Activated CD4-positive, alpha-beta memory T cell treated with anti-CD3 and anti-CD28 coated beads, Interleukin-2, amount 10 ng/mL, durations not matched to agents 7 days and 5 days (primary cell): ENCODE measurements at regions of chr5 and their contacts with region 1.

Region 1: DNA sequence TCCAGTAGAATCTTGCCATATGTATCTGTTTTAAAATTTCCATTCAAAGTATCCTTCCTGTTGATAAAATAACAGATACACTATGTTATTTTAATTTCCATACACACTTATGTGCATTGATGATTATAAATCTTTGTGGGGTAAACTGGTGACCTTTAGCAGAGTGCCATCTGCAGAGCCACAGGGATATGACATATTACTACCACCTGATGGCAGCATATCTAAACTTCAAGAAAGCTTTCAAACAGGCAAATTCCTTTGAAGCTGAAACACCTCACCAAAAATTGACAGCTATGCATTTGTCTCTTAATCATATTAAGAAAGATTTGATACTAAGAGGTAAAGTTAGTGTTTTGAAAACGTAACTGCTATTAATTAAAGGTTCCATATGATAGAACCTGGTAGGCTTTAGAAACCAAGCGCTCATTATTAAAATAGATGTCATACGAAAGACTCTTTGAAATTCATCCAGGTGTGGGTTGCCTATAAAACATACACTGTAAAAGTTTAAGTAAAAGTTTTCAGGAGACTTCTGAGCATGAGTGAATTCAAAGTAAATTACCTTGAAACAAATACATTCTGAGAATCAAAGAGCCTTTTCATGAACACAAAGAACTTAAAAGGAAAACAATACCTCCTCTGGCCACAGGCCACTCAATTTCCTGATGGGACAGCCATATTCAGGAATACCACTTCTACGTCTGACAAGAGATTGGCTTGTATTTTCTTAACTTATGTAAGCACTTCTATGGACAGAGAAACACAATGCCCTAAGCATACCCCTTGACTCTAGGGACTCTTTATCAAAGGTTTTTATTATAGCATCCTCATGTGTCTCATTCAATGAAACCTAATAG is 93.3 kb downstream of the KIAA0825 start:
- DNase-seq: peak; percentile 23
- H3K4me3 Mint-ChIP-seq: no peak overlapping the region
- H3K27ac Mint-ChIP-seq: no peak overlapping the region
- H3K4me1 Mint-ChIP-seq: peaks cover 3% of the 10 kb centered on the region
- H3K27me3 Mint-ChIP-seq: no peaks in the 10 kb centered on the region

Region 2: DNA sequence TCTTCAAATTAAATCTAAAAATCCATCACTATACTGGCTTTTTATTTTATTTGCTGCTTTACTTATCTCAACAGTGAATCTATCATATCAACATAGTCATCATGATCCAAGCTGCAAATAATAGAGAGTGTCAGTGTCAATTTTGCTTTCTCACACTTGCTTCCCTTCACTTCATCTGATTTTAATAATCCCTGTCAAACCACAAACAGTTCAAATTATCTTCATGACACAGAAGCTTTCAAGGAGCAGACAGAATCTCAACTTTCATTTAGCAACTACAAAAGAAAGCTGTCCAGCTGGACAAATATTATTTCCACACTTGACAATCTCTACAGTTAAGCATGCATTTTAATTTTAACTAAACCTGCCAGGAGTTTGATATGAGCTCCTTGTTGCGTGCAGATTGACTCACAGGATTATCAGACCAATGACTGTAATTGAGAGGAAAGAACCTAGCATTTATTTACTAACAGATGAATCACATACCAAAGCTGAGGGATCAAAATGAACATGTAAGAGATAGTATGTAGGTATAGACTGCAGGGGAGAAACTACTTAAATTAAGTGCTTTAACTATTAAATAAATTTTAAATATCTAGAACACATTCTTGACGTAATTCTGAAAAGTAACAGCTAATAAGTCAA is 37.4 kb after region 1 on chr5:
- CTCF ChIA-PET with region 1: no interaction called
- POLR2A ChIA-PET with region 1: no interaction called
- DNase-seq: no peak
- H3K4me3 Mint-ChIP-seq: no peak overlapping the region
- H3K27ac Mint-ChIP-seq: no peak overlapping the region
- H3K4me1 Mint-ChIP-seq: no peaks in the 10 kb centered on the region
- H3K27me3 Mint-ChIP-seq: no peaks in the 10 kb centered on the region

Region 3: GRCh38 chr5:94618493-94619328 is 93.6 kb after region 1 on chr5 and contains the starts of genes KIAA0825 and SLF1:
- CTCF ChIA-PET with region 1: interaction called, 11 read pairs
- POLR2A ChIA-PET with region 1: no interaction called
- DNase-seq: peak; percentile 91
- H3K4me3 Mint-ChIP-seq: peak within 1 kb of the TSS; percentile 88
- H3K27ac Mint-ChIP-seq: peak within 1 kb of the TSS; percentile 74
- H3K4me1 Mint-ChIP-seq: peaks cover 54% of the 10 kb centered on the region
- H3K27me3 Mint-ChIP-seq: no peaks in the 10 kb centered on the region
- total RNA-seq, gene KIAA0825: 1.5 to 1.7 TPM
- total RNA-seq, gene SLF1: 19.5 to 22.9 TPM

Region 4: DNA sequence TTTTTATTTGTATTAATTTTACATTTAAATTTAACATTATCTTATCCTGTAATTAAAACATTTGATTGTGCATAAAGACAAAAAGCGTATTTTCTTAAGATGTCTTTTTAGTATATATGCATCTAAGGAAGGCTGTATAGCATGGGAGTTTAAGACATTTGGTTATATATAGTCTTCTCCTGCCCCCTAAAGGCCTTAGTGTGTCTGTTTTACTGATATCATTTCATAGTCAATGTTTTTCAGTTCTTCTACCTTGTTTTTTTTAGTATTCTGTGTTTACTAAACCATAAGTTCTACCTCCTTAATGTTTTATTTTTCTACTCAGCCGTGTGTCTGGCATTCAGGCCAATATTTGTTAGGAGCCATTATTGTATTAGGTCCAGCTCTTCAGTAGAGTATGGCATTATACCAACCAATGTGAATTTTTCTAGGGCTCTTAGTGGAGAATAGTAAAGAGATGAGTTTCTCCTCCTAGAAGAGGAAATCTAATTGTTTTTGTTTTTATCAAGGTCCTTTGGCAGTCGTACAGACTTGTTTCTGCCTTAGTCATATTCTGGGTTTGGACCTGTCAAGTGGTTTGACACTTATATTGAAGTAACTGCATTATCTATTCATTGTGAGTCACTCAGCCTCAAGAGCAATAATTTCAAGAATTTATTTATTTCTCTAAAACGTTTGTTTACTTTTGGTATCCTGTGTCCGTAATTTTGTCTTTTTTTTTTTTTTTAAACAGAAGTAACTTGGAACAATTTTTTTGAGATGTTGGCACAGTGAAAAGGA is 168.2 kb after region 1 on chr5:
- CTCF ChIA-PET with region 1: interaction called, 16 read pairs
- POLR2A ChIA-PET with region 1: interaction called, 4 read pairs
- DNase-seq: no peak
- H3K4me3 Mint-ChIP-seq: no peak overlapping the region
- H3K27ac Mint-ChIP-seq: no peak overlapping the region
- H3K4me1 Mint-ChIP-seq: peaks cover 9% of the 10 kb centered on the region
- H3K27me3 Mint-ChIP-seq: no peaks in the 10 kb centered on the region